Heart right ventricle (tissue), 16 donors: ENCODE measurements at regions of chr7 and their contacts with region 1.

Region 1: GRCh38 chr7:39609113-39609934 is 14.0 kb upstream of the RALA start:
- DNase-seq: peak; percentile 6 to 33
- ATAC-seq: peak; percentile 52 to 83 (median 78)
- H3K4me3 ChIP-seq: peak overlapping the region in 9 of 10 donors; percentile 25 to 57 (median 47)
- H3K27ac ChIP-seq: peak overlapping the region in 8 of 10 donors; percentile 14 to 89 (median 66)
- H3K4me1 ChIP-seq: peaks cover 0 to 45% (median 20%) of the 10 kb centered on the region in 9 donors
- H3K27me3 ChIP-seq: peaks cover 0 to 21% (median 0%) of the 10 kb centered on the region in 7 donors
- CTCF ChIP-seq: peak in 2 of 9 donors; percentile 17 to 25

Region 2: GRCh38 chr7:39589323-39590111 is 19.8 kb before region 1 on chr7:
- intact Hi-C with region 1: loop called in 1 of 10 experiments (anchors 2 kb)
- DNase-seq: peak in 1 of 2 donors; percentile 16
- ATAC-seq: peak; percentile 38 to 90 (median 82)
- H3K4me3 ChIP-seq: no peak overlapping the region
- H3K27ac ChIP-seq: peak overlapping the region in 4 of 10 donors; percentile 8 to 61 (median 30)
- H3K4me1 ChIP-seq: peaks cover 0 to 34% (median 12%) of the 10 kb centered on the region in 9 donors
- H3K27me3 ChIP-seq: no peaks in the 10 kb centered on the region
- CTCF ChIP-seq: no peak